CD8-positive, alpha-beta T cell (primary cell): ENCODE measurements at regions of chr13 and their contacts with region 1.

Region 1: DNA sequence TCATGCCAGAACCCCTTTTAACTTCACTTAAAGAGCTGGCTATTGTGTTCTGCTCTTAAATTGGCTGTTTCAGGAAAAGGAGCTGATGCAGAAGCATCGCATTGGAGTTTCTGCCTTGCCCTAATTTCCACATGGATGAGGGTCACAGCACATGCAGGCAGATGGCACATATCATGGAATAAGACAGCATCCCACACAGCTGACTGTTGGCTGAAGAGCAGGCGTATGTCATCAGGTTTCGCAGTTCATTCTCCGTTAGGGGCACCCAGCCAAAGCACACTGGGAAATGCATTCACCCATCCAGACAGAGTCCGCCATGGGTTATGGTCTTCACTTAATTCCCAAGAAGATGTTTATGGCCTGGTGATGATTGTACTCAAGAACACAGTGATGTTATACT is 572.5 kb downstream of the LIG4 start:
- DNase-seq: no peak
- ATAC-seq: no peak
- H3K4me3 ChIP-seq: no peak overlapping the region
- H3K4me3 Mint-ChIP-seq: no peak overlapping the region
- H3K27ac ChIP-seq: no peak overlapping the region
- H3K27ac Mint-ChIP-seq: no peak overlapping the region
- H3K4me1 ChIP-seq: no peaks in the 10 kb centered on the region
- H3K4me1 Mint-ChIP-seq: no peaks in the 10 kb centered on the region
- H3K27me3 ChIP-seq: no peaks in the 10 kb centered on the region
- H3K27me3 Mint-ChIP-seq: no peaks in the 10 kb centered on the region
- CTCF ChIP-seq: no peak

Region 2: GRCh38 chr13:107329991-107330390 is 312.8 kb before region 1 on chr13:
- CTCF ChIA-PET with region 1: no interaction called
- POLR2A ChIA-PET with region 1: no interaction called
- intact Hi-C with region 1: loop called in 1 of 2 experiments (anchors 5 kb)
- DNase-seq: no peak
- ATAC-seq: no peak
- H3K4me3 ChIP-seq: no peak overlapping the region
- H3K4me3 Mint-ChIP-seq: no peak overlapping the region
- H3K27ac ChIP-seq: no peak overlapping the region
- H3K27ac Mint-ChIP-seq: no peak overlapping the region
- H3K4me1 ChIP-seq: no peaks in the 10 kb centered on the region
- H3K4me1 Mint-ChIP-seq: no peaks in the 10 kb centered on the region
- H3K27me3 ChIP-seq: no peaks in the 10 kb centered on the region
- H3K27me3 Mint-ChIP-seq: no peaks in the 10 kb centered on the region
- CTCF ChIP-seq: no peak

Region 3: GRCh38 chr13:107553838-107554237 is 89.0 kb before region 1 on chr13:
- CTCF ChIA-PET with region 1: no interaction called
- POLR2A ChIA-PET with region 1: no interaction called
- intact Hi-C with region 1: no loop called
- DNase-seq: no peak
- ATAC-seq: no peak
- H3K4me3 ChIP-seq: no peak overlapping the region
- H3K4me3 Mint-ChIP-seq: no peak overlapping the region
- H3K27ac ChIP-seq: no peak overlapping the region
- H3K27ac Mint-ChIP-seq: no peak overlapping the region
- H3K4me1 ChIP-seq: no peaks in the 10 kb centered on the region
- H3K4me1 Mint-ChIP-seq: no peaks in the 10 kb centered on the region
- H3K27me3 ChIP-seq: no peaks in the 10 kb centered on the region
- H3K27me3 Mint-ChIP-seq: no peaks in the 10 kb centered on the region
- CTCF ChIP-seq: no peak

Region 4: DNA sequence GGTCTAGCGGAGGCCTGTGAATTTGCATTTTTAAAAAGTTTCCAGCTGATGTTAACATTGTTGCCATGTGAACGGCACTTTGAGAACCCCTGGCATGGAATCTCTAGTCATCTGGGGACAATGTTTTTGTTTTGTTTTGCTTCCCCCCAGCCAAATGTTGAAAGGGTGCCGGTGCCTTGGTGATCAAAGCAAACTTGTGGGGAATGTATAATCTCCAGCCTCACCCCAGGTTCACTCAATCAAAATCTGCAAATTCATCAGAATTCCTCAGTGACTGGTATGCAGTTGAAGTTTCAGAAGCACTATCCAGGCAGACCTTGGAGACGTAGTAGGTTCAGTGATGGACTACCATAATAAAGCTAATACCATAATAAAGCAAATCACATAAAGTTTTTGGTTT is 1415.3 kb after region 1 on chr13:
- CTCF ChIA-PET with region 1: no interaction called
- POLR2A ChIA-PET with region 1: no interaction called
- intact Hi-C with region 1: no loop called
- DNase-seq: no peak
- ATAC-seq: no peak
- H3K4me3 ChIP-seq: no peak overlapping the region
- H3K4me3 Mint-ChIP-seq: no peak overlapping the region
- H3K27ac ChIP-seq: no peak overlapping the region
- H3K27ac Mint-ChIP-seq: no peak overlapping the region
- H3K4me1 ChIP-seq: no peaks in the 10 kb centered on the region
- H3K4me1 Mint-ChIP-seq: no peaks in the 10 kb centered on the region
- H3K27me3 ChIP-seq: no peaks in the 10 kb centered on the region
- H3K27me3 Mint-ChIP-seq: peaks cover 2% of the 10 kb centered on the region
- CTCF ChIP-seq: no peak